ENCODE measurements at regions of chr19 and their contacts with region 1.

Region 1: DNA sequence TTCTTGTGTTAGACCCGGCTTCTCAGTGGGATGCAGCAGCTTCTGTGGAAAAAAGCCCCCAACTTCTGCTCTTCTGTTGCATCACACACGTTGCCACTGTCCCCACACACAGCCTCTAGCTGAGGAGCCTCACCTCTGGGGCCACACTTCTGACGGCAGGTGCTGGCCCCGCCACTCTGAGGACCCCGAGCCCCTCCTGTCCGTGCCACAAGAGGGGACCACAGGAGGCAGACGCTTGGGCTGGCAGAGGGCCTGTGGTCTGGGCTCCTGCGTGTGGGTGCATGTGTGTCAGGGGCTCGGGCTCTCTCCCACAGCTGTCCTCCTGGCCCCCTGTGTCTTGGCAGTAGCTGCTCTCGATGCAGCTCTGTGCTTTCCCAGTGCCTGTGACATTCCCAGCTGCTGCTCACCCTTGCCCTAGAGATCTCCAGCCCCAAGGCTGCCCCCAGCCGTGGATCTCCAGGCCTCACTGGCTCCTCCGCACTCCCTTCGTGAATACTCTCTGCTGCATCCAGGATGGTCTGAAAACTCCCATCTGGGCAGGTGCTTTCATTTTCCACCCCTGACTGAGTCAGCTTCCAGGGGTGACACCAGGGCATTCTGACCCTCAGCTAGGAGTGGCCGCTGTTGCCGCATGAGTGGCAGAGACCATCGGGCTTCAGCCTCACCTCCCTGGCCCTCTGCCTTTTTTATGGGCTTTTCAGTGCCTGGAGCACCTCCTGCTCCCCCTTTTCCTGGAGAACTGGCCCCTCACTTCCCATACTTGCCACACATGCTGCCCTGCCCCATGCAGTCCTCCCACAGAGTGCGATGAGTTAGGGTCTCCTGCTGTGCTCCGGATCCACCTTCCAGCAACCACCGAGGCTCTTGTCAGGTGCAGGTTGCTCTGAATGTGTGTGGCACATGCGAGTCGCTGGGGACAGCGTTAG is 13.7 kb downstream of the MAU2 start:
- DNase-seq: no peak
- H3K4me3 ChIP-seq: no peak overlapping the region
- H3K27ac ChIP-seq: no peak overlapping the region
- H3K4me1 ChIP-seq: peaks cover 48% of the 10 kb centered on the region
- H3K27me3 ChIP-seq: no peaks in the 10 kb centered on the region
- CTCF ChIP-seq: no peak

Region 2: DNA sequence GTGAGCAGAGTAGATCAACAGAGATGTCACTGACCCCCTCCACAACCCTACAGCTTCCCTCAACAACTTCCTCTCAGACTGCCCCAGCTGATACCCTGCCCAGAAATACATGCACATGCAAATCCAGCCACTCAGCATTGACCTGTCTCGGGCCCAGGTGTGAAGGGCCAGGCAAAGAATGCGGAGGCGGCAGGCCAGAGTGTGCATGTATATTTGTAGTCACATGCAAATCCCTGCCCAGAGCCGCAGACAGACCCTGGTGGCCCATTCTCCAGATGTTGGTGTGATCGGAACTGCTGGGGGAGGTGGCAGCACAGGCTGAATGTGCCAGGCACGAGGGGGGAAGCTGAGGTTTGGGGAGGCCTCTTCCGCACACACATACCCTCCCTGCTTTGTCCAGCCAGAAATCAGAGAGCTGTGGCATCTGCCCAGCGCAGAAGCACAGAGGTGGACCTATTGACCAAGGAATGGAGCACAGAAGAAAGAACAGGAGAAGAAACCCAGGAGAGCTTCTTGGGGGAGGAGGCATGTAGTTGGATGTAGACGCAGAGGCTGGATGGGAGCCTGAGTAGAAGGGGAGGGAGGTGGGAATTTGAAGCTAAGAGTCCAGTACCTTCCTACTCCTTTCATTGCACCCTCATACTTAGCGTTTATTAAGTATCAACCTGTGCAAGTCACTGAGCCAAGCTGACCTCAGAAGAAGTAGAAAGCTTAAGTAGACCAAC is 178.7 kb before region 1 on chr19:
- CTCF ChIA-PET with region 1: no interaction called
- dilution Hi-C with region 1: loop called (anchors 5 kb)
- in situ Hi-C with region 1: loop called in 1 of 2 experiments (anchors 25 kb)
- intact Hi-C with region 1: no loop called
- DNase-seq: no peak
- H3K4me3 ChIP-seq: no peak overlapping the region
- H3K27ac ChIP-seq: no peak overlapping the region
- H3K4me1 ChIP-seq: no peaks in the 10 kb centered on the region
- H3K27me3 ChIP-seq: no peaks in the 10 kb centered on the region
- CTCF ChIP-seq: no peak

Region 3: DNA sequence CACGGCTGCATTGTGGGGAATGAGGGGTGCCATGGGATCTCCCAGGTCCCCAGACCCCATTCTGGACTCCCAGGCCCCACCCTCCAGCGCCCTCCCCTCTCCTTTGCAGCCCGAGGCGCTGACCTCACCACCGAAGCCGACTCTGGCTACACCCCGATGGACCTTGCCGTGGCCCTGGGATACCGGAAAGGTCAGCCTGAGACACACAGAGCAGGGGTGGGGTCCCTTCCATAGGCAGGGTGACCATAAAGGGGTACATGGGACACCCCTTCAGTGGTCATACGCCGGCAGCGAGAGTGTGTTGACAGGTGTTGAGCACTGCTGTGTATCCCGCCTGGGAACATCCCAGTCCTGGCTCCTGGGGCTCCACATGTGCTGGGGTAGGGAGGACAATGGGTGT is 135.3 kb before region 1 on chr19:
- CTCF ChIA-PET with region 1: no interaction called
- dilution Hi-C with region 1: loop called (anchors 5 kb)
- in situ Hi-C with region 1: no loop called
- intact Hi-C with region 1: no loop called
- DNase-seq: no peak
- H3K4me3 ChIP-seq: no peak overlapping the region
- H3K27ac ChIP-seq: no peak overlapping the region
- H3K4me1 ChIP-seq: peaks cover 15% of the 10 kb centered on the region
- H3K27me3 ChIP-seq: no peaks in the 10 kb centered on the region
- CTCF ChIP-seq: no peak